ENCODE measurements at regions of chr3 and their contacts with region 1.

Region 1: GRCh38 chr3:32420126-32421038 is 28.7 kb downstream of the CMTM7 start:
- DNase-seq: peak; percentile 56
- ATAC-seq: peak; percentile 91
- H3K4me3 ChIP-seq: no peak overlapping the region
- H3K27ac ChIP-seq: no peak overlapping the region
- H3K4me1 ChIP-seq: peaks cover 35% of the 10 kb centered on the region
- H3K27me3 ChIP-seq: no peaks in the 10 kb centered on the region
- CTCF ChIP-seq: peak in 1 of 3 experiments; percentile 22; a peak in 2 of 6 replicates
- EP300 ChIP-seq: peak; percentile 68 to 89; a peak in 3 of 4 replicates
- POLR2A ChIP-seq: no peak
- RAD21 ChIP-seq: peak; percentile 48

Region 2: GRCh38 chr3:32401556-32402081 is 18.8 kb before region 1 on chr3:
- CTCF ChIA-PET with region 1: interaction called, 4 read pairs
- POLR2A ChIA-PET with region 1: interaction called, 8 read pairs
- RAD21 ChIA-PET with region 1: interaction called, 6 read pairs
- SMC1A ChIA-PET with region 1: interaction called, 14 read pairs
- in situ Hi-C with region 1: no loop called
- intact Hi-C with region 1: no loop called
- DNase-seq: no peak
- ATAC-seq: peak; percentile 83
- H3K4me3 ChIP-seq: peak overlapping the region; percentile 61
- H3K27ac ChIP-seq: no peak overlapping the region
- H3K4me1 ChIP-seq: peaks cover 3% of the 10 kb centered on the region
- H3K27me3 ChIP-seq: peaks cover 0 to 3% of the 10 kb centered on the region in 2 experiments; a peak in 1 of 4 replicates
- CTCF ChIP-seq: no peak
- EP300 ChIP-seq: no peak
- POLR2A ChIP-seq: no peak
- RAD21 ChIP-seq: no peak

Region 3: DNA sequence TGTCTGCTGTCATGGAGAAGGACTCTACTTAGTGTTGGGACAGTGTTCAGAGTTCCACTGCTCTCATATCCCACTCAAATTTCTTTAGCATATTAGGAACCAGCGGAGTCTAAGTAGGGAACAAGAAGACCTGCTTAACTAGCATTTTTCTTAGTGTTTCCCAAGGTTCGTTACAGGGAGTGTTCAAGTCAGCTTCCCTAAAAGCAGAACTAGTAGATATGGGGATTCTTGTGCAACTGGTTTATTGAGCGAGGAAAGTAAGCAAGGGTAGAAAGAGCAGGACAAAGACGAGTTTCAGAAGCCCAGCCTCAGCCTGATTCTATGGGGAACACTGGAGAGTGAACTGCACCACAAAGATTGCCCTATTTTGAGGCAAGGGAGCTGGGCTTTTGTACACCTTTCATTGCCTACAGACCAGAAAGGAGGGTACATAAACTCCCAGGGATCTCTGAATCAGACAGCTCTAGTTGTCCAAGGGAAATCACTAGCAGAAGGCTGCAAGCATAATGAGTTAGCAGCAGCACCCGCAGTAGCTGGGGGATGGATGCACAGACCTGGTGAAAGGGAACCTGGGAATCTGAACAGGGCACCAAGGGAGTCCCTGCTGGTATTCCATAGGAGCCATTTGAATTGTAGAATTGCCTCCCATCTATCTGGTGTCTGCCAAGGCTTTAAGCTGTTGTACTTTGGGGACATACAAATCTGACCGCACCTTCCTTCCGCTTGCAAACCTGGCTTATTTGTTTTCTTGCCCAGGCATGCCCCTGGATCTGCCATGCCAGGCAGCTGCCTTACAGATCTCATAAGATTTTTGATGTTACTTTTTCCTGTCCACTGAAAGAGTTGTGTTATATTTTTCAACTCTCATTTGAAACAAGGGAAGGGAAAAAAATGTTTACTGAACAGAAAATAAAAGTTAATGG is 13.6 kb before region 1 on chr3:
- CTCF ChIA-PET with region 1: interaction called, 6 read pairs
- POLR2A ChIA-PET with region 1: interaction called, 4 read pairs
- RAD21 ChIA-PET with region 1: interaction called, 4 read pairs
- SMC1A ChIA-PET with region 1: interaction called, 16 read pairs
- in situ Hi-C with region 1: no loop called
- intact Hi-C with region 1: no loop called
- DNase-seq: no peak
- ATAC-seq: no peak
- H3K4me3 ChIP-seq: no peak overlapping the region
- H3K27ac ChIP-seq: no peak overlapping the region
- H3K4me1 ChIP-seq: no peaks in the 10 kb centered on the region; the same call in 1 of the 2 replicates
- H3K27me3 ChIP-seq: no peaks in the 10 kb centered on the region
- CTCF ChIP-seq: no peak
- EP300 ChIP-seq: no peak
- POLR2A ChIP-seq: no peak
- RAD21 ChIP-seq: no peak

Region 4: GRCh38 chr3:32460031-32460749 is 39.8 kb after region 1 on chr3:
- CTCF ChIA-PET with region 1: interaction called, 41 read pairs
- POLR2A ChIA-PET with region 1: interaction called, 8 read pairs
- RAD21 ChIA-PET with region 1: interaction called, 5 read pairs
- SMC1A ChIA-PET with region 1: interaction called, 13 read pairs
- in situ Hi-C with region 1: no loop called
- intact Hi-C with region 1: loop called (anchors 5 kb)
- DNase-seq: no peak
- ATAC-seq: peak; percentile 76
- H3K4me3 ChIP-seq: peak overlapping the region; percentile 30; the same call in 1 of the 2 replicates
- H3K27ac ChIP-seq: no peak overlapping the region
- H3K4me1 ChIP-seq: peaks cover 36% of the 10 kb centered on the region
- H3K27me3 ChIP-seq: no peaks in the 10 kb centered on the region
- CTCF ChIP-seq: no peak
- EP300 ChIP-seq: no peak
- POLR2A ChIP-seq: no peak
- RAD21 ChIP-seq: no peak

Region 5: DNA sequence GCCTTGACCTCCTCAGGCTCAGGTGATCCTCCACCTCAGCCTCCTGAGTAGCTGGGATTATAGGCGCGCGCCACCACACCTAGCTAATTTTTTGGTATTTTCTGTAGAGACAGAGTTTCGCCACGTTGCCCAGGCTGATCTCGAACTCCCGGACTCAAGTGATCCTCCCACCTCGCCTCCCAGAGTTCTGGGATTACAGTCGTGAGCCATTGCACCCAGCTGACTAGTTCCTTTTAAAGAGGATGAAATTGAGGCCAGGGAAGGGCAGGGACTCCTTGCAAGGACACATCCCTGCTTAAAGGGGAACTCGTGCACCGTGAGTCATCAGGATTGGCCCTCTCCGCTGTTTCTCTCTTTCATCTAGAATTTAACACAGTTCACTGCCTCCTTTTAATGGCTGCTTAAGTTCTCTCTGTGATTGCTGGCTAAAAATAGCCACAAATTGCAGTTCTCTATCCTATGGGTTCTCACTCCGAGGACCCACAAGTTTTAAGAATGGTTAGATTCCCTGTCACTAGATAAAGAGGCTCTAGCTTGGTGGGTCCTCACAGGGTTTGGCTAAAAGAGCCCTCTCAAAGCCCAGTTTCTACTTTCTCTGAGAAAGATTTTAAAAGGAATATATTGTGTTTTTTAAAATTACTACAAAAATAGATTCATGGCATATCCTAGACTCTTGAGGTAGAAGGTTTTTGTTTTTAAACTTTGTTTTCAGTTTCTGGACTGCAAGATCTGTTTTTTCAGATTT is 694.8 kb after region 1 on chr3:
- CTCF ChIA-PET with region 1: no interaction called
- POLR2A ChIA-PET with region 1: no interaction called
- RAD21 ChIA-PET with region 1: no interaction called
- SMC1A ChIA-PET with region 1: no interaction called
- in situ Hi-C with region 1: no loop called
- intact Hi-C with region 1: no loop called
- DNase-seq: no peak
- ATAC-seq: peak; percentile 24
- H3K4me3 ChIP-seq: peak overlapping the region; percentile 75
- H3K27ac ChIP-seq: no peak overlapping the region
- H3K4me1 ChIP-seq: peaks cover 24% of the 10 kb centered on the region
- H3K27me3 ChIP-seq: no peaks in the 10 kb centered on the region
- CTCF ChIP-seq: no peak
- EP300 ChIP-seq: no peak
- POLR2A ChIP-seq: no peak
- RAD21 ChIP-seq: no peak